HEK293 (cell line): ENCODE measurements at regions of chr5 and their contacts with region 1.

Region 1: GRCh38 chr5:58460732-58461286 is 923 bp upstream of the PLK2 start:
- H3K4me3 ChIP-seq: peak overlapping the region; percentile 98
- H3K27ac ChIP-seq: peak overlapping the region; percentile 98
- H3K4me1 ChIP-seq: no peaks in the 10 kb centered on the region
- CTCF ChIP-seq: peak; percentile 81

Region 2: DNA sequence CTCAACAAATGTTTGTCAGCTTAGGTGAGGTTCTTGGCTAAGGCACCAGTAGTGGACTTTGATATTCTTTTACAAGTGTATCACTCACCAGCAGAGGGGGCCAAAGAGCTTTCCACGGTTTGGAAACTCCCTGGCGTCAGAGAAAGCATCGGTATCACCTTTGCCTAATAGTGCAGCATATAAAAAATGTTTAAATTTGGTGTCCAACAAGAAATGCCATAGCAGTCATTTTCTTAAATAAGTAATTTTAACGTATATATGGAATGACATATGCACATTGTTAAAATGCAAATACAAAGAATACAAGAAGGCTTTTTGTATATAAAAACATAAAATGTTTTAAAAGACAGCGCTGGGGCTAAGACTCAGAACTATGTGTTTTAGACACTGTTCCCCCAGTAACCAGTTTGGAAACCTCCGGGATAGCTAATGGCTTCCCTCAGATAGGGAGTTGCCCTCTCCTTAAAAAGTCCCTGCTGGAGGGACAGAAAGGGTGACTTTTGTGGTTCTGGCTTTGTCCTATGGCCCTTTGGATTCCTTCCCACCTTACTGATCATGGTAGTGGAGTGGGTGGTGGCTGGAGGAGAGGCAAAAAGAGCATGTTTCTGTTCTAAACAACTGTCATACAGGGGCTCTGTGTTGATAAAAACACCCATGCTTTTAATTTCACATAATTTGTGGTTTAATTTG is 1162.4 kb before region 1 on chr5:
- CTCF ChIA-PET with region 1: interaction called, 23 read pairs
- POLR2A ChIA-PET with region 1: interaction called, 8 read pairs
- H3K4me3 ChIP-seq: no peak overlapping the region
- H3K27ac ChIP-seq: no peak overlapping the region
- H3K4me1 ChIP-seq: no peaks in the 10 kb centered on the region; the same call in none of the 2 replicates
- CTCF ChIP-seq: peak; percentile 54; the same call in 1 of the 2 replicates

Region 3: GRCh38 chr5:57887851-57888621 is 572.8 kb before region 1 on chr5:
- CTCF ChIA-PET with region 1: interaction called, 19 read pairs
- POLR2A ChIA-PET with region 1: interaction called, 8 read pairs
- H3K4me3 ChIP-seq: no peak overlapping the region
- H3K27ac ChIP-seq: no peak overlapping the region
- H3K4me1 ChIP-seq: no peaks in the 10 kb centered on the region
- CTCF ChIP-seq: peak; percentile 30; the same call in 1 of the 2 replicates